HCT116 (cell line): ENCODE measurements at regions of chr5 and their contacts with region 1.

Region 1: DNA sequence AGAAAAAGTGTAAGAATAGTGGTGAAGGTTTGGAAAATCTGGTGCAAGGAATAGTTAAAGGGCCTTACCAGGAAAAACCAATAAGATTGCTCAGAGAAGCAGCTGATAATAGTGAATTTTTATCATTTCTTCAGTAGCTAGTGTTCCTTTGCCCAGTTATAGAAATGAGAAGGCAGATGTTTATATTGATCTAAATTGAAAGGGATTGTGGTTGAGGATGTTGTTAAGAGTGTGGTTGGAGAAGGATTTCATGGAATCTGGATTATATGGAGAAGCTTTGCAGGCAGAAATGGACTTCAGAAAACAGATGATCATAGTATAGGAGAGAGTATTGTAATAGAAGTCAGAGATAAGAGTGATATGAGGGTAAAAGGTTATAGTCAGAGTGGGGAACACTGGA is 102.6 kb downstream of the XRCC4 start:
- DNase-seq: no peak
- ATAC-seq: no peak
- H3K4me3 ChIP-seq: no peak overlapping the region
- H3K27ac ChIP-seq: no peak overlapping the region
- H3K4me1 ChIP-seq: no peaks in the 10 kb centered on the region
- H3K27me3 ChIP-seq: no peaks in the 10 kb centered on the region
- CTCF ChIP-seq: no peak
- POLR2A ChIP-seq: no peak
- RAD21 ChIP-seq: no peak

Region 2: GRCh38 chr5:82820961-82821845 is 358.8 kb before region 1 on chr5:
- CTCF ChIA-PET with region 1: no interaction called
- POLR2A ChIA-PET with region 1: no interaction called
- RAD21 ChIA-PET with region 1: no interaction called
- intact Hi-C with region 1: no loop called
- DNase-seq: no peak
- ATAC-seq: no peak
- H3K4me3 ChIP-seq: no peak overlapping the region
- H3K27ac ChIP-seq: no peak overlapping the region
- H3K4me1 ChIP-seq: no peaks in the 10 kb centered on the region
- H3K27me3 ChIP-seq: no peaks in the 10 kb centered on the region
- CTCF ChIP-seq: no peak
- POLR2A ChIP-seq: no peak
- RAD21 ChIP-seq: no peak

Region 3: DNA sequence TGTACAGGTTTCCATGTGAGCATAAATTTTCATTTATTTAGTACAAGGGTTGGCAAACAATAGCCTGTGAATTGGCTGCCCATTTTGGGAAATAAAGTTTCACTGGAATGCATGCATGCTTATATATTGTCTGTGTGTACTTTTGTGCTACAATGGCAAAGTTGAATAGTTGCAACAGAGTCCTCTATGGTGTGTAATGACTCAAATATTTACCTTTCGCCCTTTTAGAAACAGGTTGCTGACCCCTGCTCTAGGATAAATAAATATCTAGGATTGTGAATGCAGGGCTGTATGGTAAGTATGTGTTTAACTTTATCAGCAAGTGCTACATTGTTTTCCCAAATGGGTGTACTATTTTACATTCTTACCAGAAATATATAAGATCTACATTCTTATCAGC is 55.4 kb before region 1 on chr5:
- CTCF ChIA-PET with region 1: no interaction called
- POLR2A ChIA-PET with region 1: no interaction called
- RAD21 ChIA-PET with region 1: no interaction called
- intact Hi-C with region 1: no loop called
- DNase-seq: no peak
- ATAC-seq: no peak
- H3K4me3 ChIP-seq: no peak overlapping the region
- H3K27ac ChIP-seq: no peak overlapping the region
- H3K4me1 ChIP-seq: peaks cover 4 to 17% of the 10 kb centered on the region in 2 experiments; a peak in 3 of 4 replicates
- H3K27me3 ChIP-seq: no peaks in the 10 kb centered on the region
- CTCF ChIP-seq: no peak
- POLR2A ChIP-seq: no peak
- RAD21 ChIP-seq: no peak

Region 4: GRCh38 chr5:83199126-83199525 is 19.2 kb after region 1 on chr5:
- CTCF ChIA-PET with region 1: no interaction called
- POLR2A ChIA-PET with region 1: no interaction called
- RAD21 ChIA-PET with region 1: no interaction called
- intact Hi-C with region 1: loop called (anchors 1 kb)
- DNase-seq: no peak
- ATAC-seq: no peak
- H3K4me3 ChIP-seq: no peak overlapping the region
- H3K27ac ChIP-seq: no peak overlapping the region
- H3K4me1 ChIP-seq: no peaks in the 10 kb centered on the region
- H3K27me3 ChIP-seq: no peaks in the 10 kb centered on the region
- CTCF ChIP-seq: no peak
- POLR2A ChIP-seq: no peak
- RAD21 ChIP-seq: no peak

Region 5: DNA sequence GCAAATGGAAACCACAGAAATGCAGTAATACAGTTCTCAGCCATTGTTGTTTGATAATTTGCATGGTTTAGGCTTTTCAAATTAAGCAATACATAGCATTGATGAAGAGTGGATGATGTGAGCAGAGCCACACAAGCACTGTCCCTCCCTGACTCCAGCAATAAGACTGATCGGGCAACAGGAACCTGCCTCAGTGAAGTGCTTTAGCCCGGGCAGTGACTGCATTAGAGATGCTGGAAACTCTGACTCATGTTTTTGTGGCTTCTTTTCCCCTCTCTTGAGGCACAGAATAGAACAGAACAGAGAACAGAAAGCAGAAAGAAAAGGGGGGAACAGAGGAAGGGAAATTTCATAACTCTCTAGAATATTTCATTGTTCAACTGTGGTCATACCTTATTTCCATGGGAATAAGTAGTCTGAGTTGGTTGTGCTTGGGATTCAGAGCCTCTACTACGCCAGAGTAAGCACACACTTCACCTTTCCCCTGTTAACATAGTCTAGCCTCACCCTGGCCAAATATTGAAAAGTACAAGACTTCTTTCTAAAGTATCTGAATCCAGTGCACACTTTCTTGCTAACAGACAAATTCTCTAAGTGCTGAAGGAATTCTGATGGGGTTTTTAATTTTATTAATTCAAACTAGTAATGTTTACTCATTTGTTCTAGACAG is 126.7 kb after region 1 on chr5:
- CTCF ChIA-PET with region 1: no interaction called
- POLR2A ChIA-PET with region 1: no interaction called
- RAD21 ChIA-PET with region 1: no interaction called
- intact Hi-C with region 1: no loop called
- DNase-seq: peak; percentile 44
- ATAC-seq: peak; percentile 80
- H3K4me3 ChIP-seq: no peak overlapping the region
- H3K27ac ChIP-seq: no peak overlapping the region
- H3K4me1 ChIP-seq: peaks cover 0 to 15% of the 10 kb centered on the region in 2 experiments; a peak in 2 of 4 replicates
- H3K27me3 ChIP-seq: no peaks in the 10 kb centered on the region
- CTCF ChIP-seq: no peak
- POLR2A ChIP-seq: no peak
- RAD21 ChIP-seq: no peak